ENCODE measurements at regions of chr11 and their contacts with region 1.

Region 1: GRCh38 chr11:93741094-93741881 is at the starts of genes C11orf54 and TAF1D:
- DNase-seq: peak; percentile 96 to 98 (median 97)
- H3K4me3 ChIP-seq: peak within 1 kb of the TSS; percentile 85 to 98
- H3K4me3 Mint-ChIP-seq: peak within 1 kb of the TSS; percentile 98 to 100 (median 100)
- H3K27ac ChIP-seq: peak within 1 kb of the TSS; percentile 93
- H3K27ac Mint-ChIP-seq: peak within 1 kb of the TSS; percentile 98 to 100 (median 99)
- H3K4me1 ChIP-seq: peaks cover 51% of the 10 kb centered on the region
- H3K4me1 Mint-ChIP-seq: peaks cover 41 to 77% (median 57%) of the 10 kb centered on the region in 4 donors
- H3K27me3 ChIP-seq: no peaks in the 10 kb centered on the region
- H3K27me3 Mint-ChIP-seq: no peaks in the 10 kb centered on the region
- total RNA-seq, gene C11orf54: 31.2 to 36.4 TPM
- total RNA-seq, gene TAF1D: 198 to 199 TPM

Region 2: DNA sequence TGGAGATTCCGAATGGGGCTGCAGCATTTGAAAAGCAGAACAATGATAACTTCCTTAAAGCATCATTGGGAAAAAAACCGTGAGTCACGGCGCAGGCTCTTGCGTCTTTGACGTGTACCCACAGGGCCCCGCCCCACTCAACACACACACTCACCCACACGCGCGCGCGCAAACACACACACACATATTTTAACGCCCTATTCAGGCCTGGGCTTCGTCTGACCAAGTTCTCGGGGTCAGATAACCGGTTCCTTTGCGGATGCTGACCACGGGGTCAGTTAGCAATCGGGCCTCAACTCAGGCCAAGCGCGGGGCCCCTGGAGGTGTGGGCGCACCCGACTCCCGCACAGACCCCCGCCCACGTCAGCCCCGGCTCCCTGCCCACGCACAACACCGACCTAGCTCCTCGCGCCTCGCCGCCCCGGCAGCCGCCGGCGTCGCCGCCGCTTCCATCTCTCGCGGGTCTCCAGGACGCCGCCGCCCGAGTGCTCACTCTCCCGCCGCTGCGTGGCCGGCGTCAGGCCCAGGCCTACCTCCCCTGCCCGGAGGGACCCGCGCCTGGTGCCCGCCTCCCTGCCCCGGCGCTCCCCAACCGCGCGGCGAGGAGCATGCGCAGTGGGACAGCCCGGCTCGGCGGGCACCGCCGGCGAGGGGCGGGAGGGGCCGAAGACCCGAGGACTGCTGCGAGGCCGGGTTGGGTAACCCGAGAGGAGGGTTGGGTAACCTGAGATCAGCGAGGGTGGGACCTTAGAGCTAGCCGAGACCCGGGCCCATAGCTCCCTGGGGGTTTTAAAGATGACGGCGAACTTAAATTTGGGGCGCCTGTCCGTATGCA is 543.7 kb before region 1 on chr11 and contains the start of gene SLC36A4:
- CTCF ChIA-PET with region 1: no interaction called
- POLR2A ChIA-PET with region 1: interaction called, 12 read pairs
- intact Hi-C with region 1: loop called (anchors 1 kb)
- DNase-seq: peak; percentile 86 to 90 (median 88)
- H3K4me3 ChIP-seq: peak within 1 kb of the TSS; percentile 59 to 61
- H3K4me3 Mint-ChIP-seq: peak within 1 kb of the TSS; percentile 92 to 99 (median 96)
- H3K27ac ChIP-seq: peak within 1 kb of the TSS; percentile 92
- H3K27ac Mint-ChIP-seq: peak within 1 kb of the TSS; percentile 96 to 99 (median 98)
- H3K4me1 ChIP-seq: no peaks in the 10 kb centered on the region
- H3K4me1 Mint-ChIP-seq: peaks cover 15 to 34% (median 23%) of the 10 kb centered on the region in 4 donors
- H3K27me3 ChIP-seq: no peaks in the 10 kb centered on the region
- H3K27me3 Mint-ChIP-seq: peaks cover 0 to 3% of the 10 kb centered on the region in 2 donors
- total RNA-seq, gene SLC36A4: 15.4 to 21.5 TPM

Region 3: DNA sequence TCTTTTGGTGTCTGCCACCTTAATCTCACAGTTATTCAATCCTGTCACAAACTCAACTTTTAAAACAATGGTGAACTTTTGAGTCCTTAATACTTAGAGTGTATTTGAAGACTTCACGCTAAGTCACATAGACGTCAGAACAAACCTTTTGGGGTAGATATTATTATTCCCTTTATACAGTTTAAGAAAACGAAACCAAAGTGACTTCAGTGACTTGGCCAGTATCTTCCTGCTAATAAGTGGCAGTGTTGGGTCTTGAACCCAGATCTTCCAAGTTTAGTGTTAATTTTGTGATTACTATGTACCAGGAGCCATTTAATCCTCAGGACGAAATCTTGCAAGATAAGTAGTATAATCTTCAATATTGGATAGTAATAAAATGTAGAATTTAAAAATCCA is 79.1 kb before region 1 on chr11:
- CTCF ChIA-PET with region 1: interaction called, 5 read pairs
- POLR2A ChIA-PET with region 1: interaction called, 38 read pairs
- intact Hi-C with region 1: loop called (anchors 1 kb)
- DNase-seq: no peak
- H3K4me3 ChIP-seq: peak overlapping the region; percentile 61 to 77
- H3K4me3 Mint-ChIP-seq: peak overlapping the region; percentile 77 to 96 (median 90)
- H3K27ac ChIP-seq: peak overlapping the region; percentile 89
- H3K27ac Mint-ChIP-seq: peak overlapping the region; percentile 86 to 97 (median 96)
- H3K4me1 ChIP-seq: peaks cover 18% of the 10 kb centered on the region
- H3K4me1 Mint-ChIP-seq: peaks cover 27 to 34% (median 32%) of the 10 kb centered on the region in 4 donors
- H3K27me3 ChIP-seq: no peaks in the 10 kb centered on the region
- H3K27me3 Mint-ChIP-seq: no peaks in the 10 kb centered on the region

Region 4: GRCh38 chr11:93727985-93728791 is 13.1 kb before region 1 on chr11:
- CTCF ChIA-PET with region 1: interaction called, 4 read pairs
- POLR2A ChIA-PET with region 1: interaction called, 115 read pairs
- intact Hi-C with region 1: no loop called
- DNase-seq: no peak
- H3K4me3 ChIP-seq: no peak overlapping the region
- H3K4me3 Mint-ChIP-seq: no peak overlapping the region
- H3K27ac ChIP-seq: no peak overlapping the region
- H3K27ac Mint-ChIP-seq: peak overlapping the region in 6 of 7 donors; percentile 6 to 64 (median 44)
- H3K4me1 ChIP-seq: peaks cover 9% of the 10 kb centered on the region
- H3K4me1 Mint-ChIP-seq: peaks cover 5 to 13% (median 7%) of the 10 kb centered on the region in 4 donors
- H3K27me3 ChIP-seq: no peaks in the 10 kb centered on the region
- H3K27me3 Mint-ChIP-seq: no peaks in the 10 kb centered on the region

Region 5: GRCh38 chr11:93791493-93791892 is 50.2 kb after region 1 on chr11:
- CTCF ChIA-PET with region 1: no interaction called
- POLR2A ChIA-PET with region 1: interaction called, 180 read pairs
- intact Hi-C with region 1: no loop called
- DNase-seq: no peak
- H3K4me3 ChIP-seq: no peak overlapping the region
- H3K4me3 Mint-ChIP-seq: no peak overlapping the region
- H3K27ac ChIP-seq: no peak overlapping the region
- H3K27ac Mint-ChIP-seq: no peak overlapping the region
- H3K4me1 ChIP-seq: peaks cover 15% of the 10 kb centered on the region
- H3K4me1 Mint-ChIP-seq: peaks cover 20 to 23% (median 21%) of the 10 kb centered on the region in 4 donors
- H3K27me3 ChIP-seq: no peaks in the 10 kb centered on the region
- H3K27me3 Mint-ChIP-seq: no peaks in the 10 kb centered on the region

Region 6: GRCh38 chr11:95089620-95090542 is 1348.6 kb after region 1 on chr11 and contains the start of gene ENDOD1:
- CTCF ChIA-PET with region 1: no interaction called
- POLR2A ChIA-PET with region 1: interaction called, 4 read pairs
- intact Hi-C with region 1: loop called (anchors 10 kb)
- DNase-seq: peak; percentile 86 to 89 (median 87)
- H3K4me3 ChIP-seq: peak within 1 kb of the TSS; percentile 45 to 76
- H3K4me3 Mint-ChIP-seq: peak within 1 kb of the TSS; percentile 91 to 96 (median 92)
- H3K27ac ChIP-seq: peak within 1 kb of the TSS; percentile 67
- H3K27ac Mint-ChIP-seq: peak within 1 kb of the TSS; percentile 92 to 99 (median 98)
- H3K4me1 ChIP-seq: peaks cover 43% of the 10 kb centered on the region
- H3K4me1 Mint-ChIP-seq: peaks cover 36 to 55% (median 46%) of the 10 kb centered on the region in 4 donors
- H3K27me3 ChIP-seq: no peaks in the 10 kb centered on the region
- H3K27me3 Mint-ChIP-seq: no peaks in the 10 kb centered on the region
- total RNA-seq, gene ENDOD1: 12.8 to 13.3 TPM

Measured in CD4-positive, alpha-beta memory T cell (primary cell).